CD8-positive, alpha-beta T cell (primary cell): ENCODE measurements at regions of chr1 and their contacts with region 1.

Region 1: GRCh38 chr1:164786980-164787833 is 228.2 kb downstream of the PBX1 start:
- DNase-seq: peak; percentile 6 to 71 (median 52)
- ATAC-seq: no peak
- H3K4me3 ChIP-seq: no peak overlapping the region
- H3K4me3 Mint-ChIP-seq: no peak overlapping the region
- H3K27ac ChIP-seq: no peak overlapping the region
- H3K27ac Mint-ChIP-seq: no peak overlapping the region
- H3K4me1 ChIP-seq: no peaks in the 10 kb centered on the region
- H3K4me1 Mint-ChIP-seq: peaks cover 6% of the 10 kb centered on the region
- H3K27me3 ChIP-seq: no peaks in the 10 kb centered on the region
- H3K27me3 Mint-ChIP-seq: peaks cover 6% of the 10 kb centered on the region
- CTCF ChIP-seq: peak; percentile 37

Region 2: GRCh38 chr1:163410073-163410999 is 1376.9 kb before region 1 on chr1:
- CTCF ChIA-PET with region 1: no interaction called
- POLR2A ChIA-PET with region 1: no interaction called
- intact Hi-C with region 1: loop called in 1 of 2 experiments (anchors 5 kb)
- DNase-seq: peak in 6 of 9 experiments; percentile 3 to 32 (median 15)
- ATAC-seq: no peak
- H3K4me3 ChIP-seq: no peak overlapping the region
- H3K4me3 Mint-ChIP-seq: no peak overlapping the region
- H3K27ac ChIP-seq: no peak overlapping the region
- H3K27ac Mint-ChIP-seq: no peak overlapping the region
- H3K4me1 ChIP-seq: no peaks in the 10 kb centered on the region
- H3K4me1 Mint-ChIP-seq: peaks cover 2% of the 10 kb centered on the region
- H3K27me3 ChIP-seq: no peaks in the 10 kb centered on the region
- H3K27me3 Mint-ChIP-seq: peaks cover 11% of the 10 kb centered on the region
- CTCF ChIP-seq: peak; percentile 55

Region 3: GRCh38 chr1:164772635-164773034 is 14.6 kb before region 1 on chr1:
- CTCF ChIA-PET with region 1: interaction called, 15 read pairs
- POLR2A ChIA-PET with region 1: no interaction called
- intact Hi-C with region 1: no loop called
- DNase-seq: no peak
- ATAC-seq: no peak
- H3K4me3 ChIP-seq: no peak overlapping the region
- H3K4me3 Mint-ChIP-seq: no peak overlapping the region
- H3K27ac ChIP-seq: no peak overlapping the region
- H3K27ac Mint-ChIP-seq: no peak overlapping the region
- H3K4me1 ChIP-seq: no peaks in the 10 kb centered on the region
- H3K4me1 Mint-ChIP-seq: no peaks in the 10 kb centered on the region
- H3K27me3 ChIP-seq: peaks cover 0 to 4% of the 10 kb centered on the region in 2 experiments
- H3K27me3 Mint-ChIP-seq: no peaks in the 10 kb centered on the region
- CTCF ChIP-seq: no peak

Region 4: GRCh38 chr1:164823486-164824279 is 36.5 kb after region 1 on chr1:
- CTCF ChIA-PET with region 1: no interaction called
- POLR2A ChIA-PET with region 1: no interaction called
- intact Hi-C with region 1: no loop called
- DNase-seq: no peak
- ATAC-seq: no peak
- H3K4me3 ChIP-seq: no peak overlapping the region
- H3K4me3 Mint-ChIP-seq: no peak overlapping the region
- H3K27ac ChIP-seq: no peak overlapping the region
- H3K27ac Mint-ChIP-seq: no peak overlapping the region
- H3K4me1 ChIP-seq: no peaks in the 10 kb centered on the region
- H3K4me1 Mint-ChIP-seq: no peaks in the 10 kb centered on the region
- H3K27me3 ChIP-seq: no peaks in the 10 kb centered on the region
- H3K27me3 Mint-ChIP-seq: no peaks in the 10 kb centered on the region
- CTCF ChIP-seq: no peak